Psoas muscle (tissue), 8 donors: ENCODE measurements at regions of chr17 and their contacts with region 1.

Region 1: DNA sequence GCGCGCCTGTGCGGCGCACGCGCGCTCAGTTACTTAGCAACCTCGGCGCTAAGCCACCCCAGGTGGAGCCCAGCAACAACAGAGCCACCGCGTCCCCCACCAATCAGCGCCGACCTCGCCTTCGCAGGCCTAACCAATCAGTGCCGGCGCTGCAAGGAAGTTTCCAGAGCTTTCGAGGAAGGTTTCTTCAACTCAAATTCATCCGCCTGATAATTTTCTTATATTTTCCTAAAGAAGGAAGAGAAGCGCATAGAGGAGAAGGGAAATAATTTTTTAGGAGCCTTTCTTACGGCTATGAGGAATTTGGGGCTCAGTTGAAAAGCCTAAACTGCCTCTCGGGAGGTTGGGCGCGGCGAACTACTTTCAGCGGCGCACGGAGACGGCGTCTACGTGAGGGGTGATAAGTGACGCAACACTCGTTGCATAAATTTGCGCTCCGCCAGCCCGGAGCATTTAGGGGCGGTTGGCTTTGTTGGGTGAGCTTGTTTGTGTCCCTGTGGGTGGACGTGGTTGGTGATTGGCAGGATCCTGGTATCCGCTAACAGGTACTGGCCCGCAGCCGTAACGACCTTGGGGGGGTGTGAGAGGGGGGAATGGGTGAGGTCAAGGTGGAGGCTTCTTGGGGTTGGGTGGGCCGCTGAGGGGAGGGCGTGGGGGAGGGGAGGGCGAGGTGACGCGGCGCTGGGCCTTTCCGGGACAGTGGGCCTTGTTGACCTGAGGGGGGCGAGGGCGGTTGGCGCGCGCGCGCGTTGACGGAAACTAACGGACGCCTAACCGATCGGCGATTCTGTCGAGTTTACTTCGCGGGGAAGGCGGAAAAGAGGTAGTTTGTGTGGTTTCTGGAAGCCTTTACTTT is at the start of gene UBB:
- DNase-seq: peak; percentile 97 to 99
- ATAC-seq: peak; percentile 94 to 98 (median 97)
- H3K4me3 ChIP-seq: peak within 1 kb of the TSS; percentile 93
- H3K27ac ChIP-seq: peak within 1 kb of the TSS; percentile 99
- H3K4me1 ChIP-seq: peaks cover 22% of the 10 kb centered on the region
- H3K27me3 ChIP-seq: no peaks in the 10 kb centered on the region
- CTCF ChIP-seq: no peak
- total RNA-seq, gene UBB: 1,704 to 3,203 (median 2,212) TPM

Region 2: DNA sequence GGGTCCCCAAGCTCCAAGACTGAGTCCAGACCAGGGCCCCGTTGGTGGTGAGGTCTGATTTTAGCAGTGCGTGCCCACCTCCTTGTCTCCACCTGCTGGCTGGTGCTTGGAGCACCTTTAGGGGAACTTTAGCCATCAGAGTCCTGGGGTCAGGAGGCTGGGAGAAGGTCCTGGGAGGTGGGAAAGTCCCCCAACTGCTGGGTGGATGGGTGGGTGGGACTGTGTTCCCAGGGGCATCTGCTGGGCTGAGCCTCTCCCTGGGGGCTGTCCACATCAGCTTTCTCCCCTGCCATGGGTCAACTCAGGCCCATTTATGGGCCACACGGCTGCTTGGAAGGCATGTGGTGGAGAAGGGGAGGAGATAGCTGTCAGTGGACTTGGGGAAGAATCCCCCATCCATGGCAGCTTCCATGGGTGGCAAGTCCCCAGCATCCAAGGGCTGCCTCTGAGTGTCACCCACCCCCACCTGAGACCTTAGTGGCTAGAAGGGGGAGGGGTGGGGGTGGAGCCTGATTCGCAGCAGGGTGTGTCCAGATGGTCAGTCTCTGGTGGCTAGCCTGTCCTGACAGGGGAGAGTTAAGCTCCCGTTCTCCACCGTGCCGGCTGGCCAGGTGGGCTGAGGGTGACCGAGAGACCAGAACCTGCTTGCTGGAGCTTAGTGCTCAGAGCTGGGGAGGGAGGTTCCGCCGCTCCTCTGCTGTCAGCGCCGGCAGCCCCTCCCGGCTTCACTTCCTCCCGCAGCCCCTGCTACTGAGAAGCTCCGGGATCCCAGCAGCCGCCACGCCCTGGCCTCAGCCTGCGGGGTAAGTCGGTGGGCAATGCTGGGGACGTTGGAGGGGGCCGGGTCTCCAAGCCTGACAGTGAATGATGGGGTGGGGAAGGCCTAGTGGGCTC is 34.4 kb after region 1 on chr17 and contains the start of gene TRPV2:
- intact Hi-C with region 1: loop called in 1 of 2 experiments (anchors 2 kb)
- DNase-seq: peak in 1 of 2 donors; percentile 56
- ATAC-seq: peak; percentile 41 to 73 (median 72)
- H3K4me3 ChIP-seq: peak within 1 kb of the TSS; percentile 67
- H3K27ac ChIP-seq: peak within 1 kb of the TSS; percentile 71
- H3K4me1 ChIP-seq: no peaks in the 10 kb centered on the region
- H3K27me3 ChIP-seq: no peaks in the 10 kb centered on the region
- CTCF ChIP-seq: peak; percentile 39
- total RNA-seq, gene TRPV2: 3.9 to 10.3 (median 6.7) TPM

Region 3: DNA sequence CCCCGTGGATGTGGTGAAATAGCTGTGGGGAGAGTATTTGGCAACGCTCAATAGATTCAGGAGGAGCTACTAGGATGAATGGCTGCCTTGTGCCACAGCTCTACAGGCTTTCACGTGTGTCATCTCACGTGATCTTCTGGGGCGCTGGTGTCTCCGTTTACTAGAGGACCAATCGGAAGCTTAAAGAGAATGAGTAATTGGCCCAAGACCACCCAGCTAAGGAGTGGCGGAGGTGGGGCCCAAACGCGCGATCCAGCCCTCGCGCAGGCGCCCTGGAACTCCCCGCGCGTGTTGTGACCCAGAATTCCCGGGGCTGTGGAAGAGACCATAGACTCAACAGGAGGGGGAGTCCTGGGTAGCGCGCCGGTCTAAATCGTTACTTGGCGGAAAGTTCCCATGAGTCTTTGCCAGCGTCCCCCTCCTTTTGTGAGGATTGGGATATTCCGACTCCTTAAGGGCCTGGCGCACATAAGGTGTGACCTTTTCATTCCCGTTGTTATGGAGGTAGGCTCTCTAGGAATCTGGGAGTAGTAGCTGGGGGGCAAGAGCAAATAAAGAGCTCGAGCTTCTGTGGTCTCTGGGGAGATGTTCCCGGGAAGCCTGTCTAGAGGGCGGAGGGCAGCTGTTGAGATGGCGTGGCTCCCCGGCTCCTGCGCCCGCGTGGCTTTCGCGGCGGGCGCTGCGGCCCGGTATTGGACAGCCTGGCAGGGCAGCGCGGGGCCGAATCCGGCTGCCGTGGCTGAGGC is 57.9 kb after region 1 on chr17:
- intact Hi-C with region 1: loop called in 1 of 2 experiments (anchors 5 kb)
- DNase-seq: peak; percentile 94 to 96
- ATAC-seq: peak; percentile 89 to 94 (median 93)
- H3K4me3 ChIP-seq: peak overlapping the region; percentile 96
- H3K27ac ChIP-seq: peak overlapping the region; percentile 94
- H3K4me1 ChIP-seq: peaks cover 31% of the 10 kb centered on the region
- H3K27me3 ChIP-seq: no peaks in the 10 kb centered on the region
- CTCF ChIP-seq: no peak

Region 4: GRCh38 chr17:16521070-16521727 is 140.3 kb after region 1 on chr17:
- intact Hi-C with region 1: loop called in 1 of 2 experiments (anchors 2 kb)
- DNase-seq: peak; percentile 65 to 68
- ATAC-seq: peak; percentile 91 to 98 (median 94)
- H3K4me3 ChIP-seq: no peak overlapping the region
- H3K27ac ChIP-seq: no peak overlapping the region
- H3K4me1 ChIP-seq: peaks cover 8% of the 10 kb centered on the region
- H3K27me3 ChIP-seq: peaks cover 0 to 20% (median 0%) of the 10 kb centered on the region in 3 donors
- CTCF ChIP-seq: peak; percentile 92